OCI-LY7 (cell line): ENCODE measurements at regions of chr4 and their contacts with region 1.

Region 1: GRCh38 chr4:112765317-112765975 is 128.5 kb downstream of the LARP7 start:
- DNase-seq: peak; percentile 65
- H3K4me3 ChIP-seq: no peak overlapping the region
- H3K27ac ChIP-seq: no peak overlapping the region
- H3K4me1 ChIP-seq: no peaks in the 10 kb centered on the region
- CTCF ChIP-seq: peak; percentile 83

Region 2: DNA sequence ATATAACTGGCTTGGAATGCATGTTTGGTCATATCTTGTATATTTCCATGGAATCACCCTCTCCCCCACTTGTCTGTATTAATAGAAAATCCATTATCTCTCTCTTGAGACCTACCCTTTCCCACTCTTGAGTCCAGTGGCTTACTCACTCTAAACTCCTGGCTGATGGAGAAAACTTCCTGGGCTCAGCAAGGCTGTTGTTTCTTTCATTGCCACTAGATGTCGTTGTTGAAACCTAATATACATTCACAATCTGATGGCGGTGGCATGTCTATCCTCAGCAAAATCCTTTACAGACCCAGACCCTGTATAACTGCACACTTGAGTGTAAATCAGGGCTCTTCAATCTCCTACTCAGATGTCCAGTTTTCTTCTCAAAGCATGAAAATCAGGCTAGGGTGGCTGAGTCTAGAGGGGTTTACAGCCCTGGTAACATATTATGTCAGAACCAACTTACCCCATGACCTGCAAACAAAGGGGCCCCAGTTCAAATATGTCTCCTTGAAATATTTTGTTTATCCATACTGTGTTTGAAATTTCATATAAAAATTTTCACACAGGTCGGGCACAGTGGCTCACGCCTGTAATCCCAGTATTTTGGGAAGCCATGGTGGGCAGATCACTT is 690.2 kb before region 1 on chr4:
- CTCF ChIA-PET with region 1: no interaction called
- POLR2A ChIA-PET with region 1: no interaction called
- intact Hi-C with region 1: loop called (anchors 10 kb)
- DNase-seq: peak; percentile 68
- H3K4me3 ChIP-seq: no peak overlapping the region
- H3K27ac ChIP-seq: no peak overlapping the region
- H3K4me1 ChIP-seq: no peaks in the 10 kb centered on the region
- CTCF ChIP-seq: peak; percentile 96

Region 3: DNA sequence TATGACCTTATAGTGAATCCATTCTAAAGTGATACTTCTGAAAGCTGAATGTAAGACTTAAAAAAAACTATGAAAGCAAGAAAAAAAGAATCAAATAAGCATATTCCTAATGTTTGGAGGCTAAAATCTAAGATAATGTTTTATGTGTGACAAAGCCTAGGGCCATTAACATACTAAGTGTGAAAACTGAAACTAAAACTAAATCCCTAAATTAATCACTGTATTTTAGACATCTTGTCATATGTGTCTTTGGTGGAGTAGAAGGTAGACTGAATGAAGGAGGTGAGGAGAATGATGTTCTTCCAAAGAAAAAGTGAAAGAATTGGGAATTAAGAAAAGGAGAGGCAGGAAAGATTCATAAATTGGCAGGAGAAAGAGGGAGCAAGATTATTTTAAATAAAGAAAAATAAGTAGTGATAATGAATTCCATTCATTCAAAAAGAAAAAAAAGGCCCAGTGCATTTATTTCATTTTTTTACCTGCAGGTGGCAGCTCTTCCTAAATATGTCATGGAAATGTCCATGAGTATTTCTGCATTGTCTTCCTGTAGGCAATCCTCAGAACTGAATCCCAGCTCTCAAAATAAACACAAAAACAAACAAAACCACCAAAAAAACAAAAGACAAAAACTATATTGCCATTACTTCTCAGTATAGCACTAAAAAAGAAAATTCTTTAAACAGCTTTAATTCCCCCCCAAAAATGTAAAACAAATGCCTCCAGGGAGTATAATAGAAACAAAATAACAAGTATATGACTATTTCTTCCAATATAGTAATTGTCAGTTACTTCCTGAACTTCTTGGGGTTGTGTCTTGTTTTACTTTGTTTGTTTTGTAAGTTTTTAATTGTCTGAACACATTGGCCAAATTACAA is 550.8 kb before region 1 on chr4:
- CTCF ChIA-PET with region 1: no interaction called
- POLR2A ChIA-PET with region 1: no interaction called
- intact Hi-C with region 1: loop called (anchors 10 kb)
- DNase-seq: peak; percentile 51
- H3K4me3 ChIP-seq: no peak overlapping the region
- H3K27ac ChIP-seq: no peak overlapping the region
- H3K4me1 ChIP-seq: peaks cover 4% of the 10 kb centered on the region
- CTCF ChIP-seq: peak; percentile 84

Region 4: DNA sequence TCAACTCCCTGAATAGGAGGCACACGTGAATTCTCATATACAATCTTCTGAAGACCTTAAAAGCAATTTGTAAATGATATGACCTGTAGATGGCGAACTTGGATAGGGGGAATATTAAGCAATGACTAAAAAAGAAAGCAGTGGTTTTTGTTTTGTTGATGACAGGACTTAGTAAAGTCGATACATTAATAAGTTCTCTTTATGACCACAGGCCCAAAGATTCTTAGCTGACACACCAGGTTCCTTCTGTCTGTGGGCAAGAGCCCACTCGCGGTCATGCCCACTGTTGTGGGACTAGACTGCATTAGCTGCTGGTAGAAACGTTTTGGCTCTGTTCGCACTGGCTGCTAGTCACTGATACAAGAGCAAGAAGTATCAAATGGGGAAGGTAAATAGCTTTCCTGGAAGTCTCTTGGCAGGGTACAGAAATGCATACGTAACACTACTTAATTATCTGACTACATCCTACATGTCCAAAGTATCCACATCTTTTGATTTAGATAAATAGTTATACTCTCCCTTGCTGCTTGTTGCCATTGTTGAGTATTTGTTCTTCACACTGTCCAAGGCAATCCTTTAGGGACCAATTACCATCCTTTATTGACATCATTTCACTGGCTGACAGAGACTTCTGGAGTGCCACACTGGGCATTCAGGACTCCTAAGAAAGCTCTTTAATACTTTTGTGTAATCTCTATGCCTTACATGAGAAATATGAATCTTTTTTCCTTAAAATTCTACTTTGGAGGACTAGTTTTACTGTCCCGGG is 437.3 kb before region 1 on chr4:
- CTCF ChIA-PET with region 1: no interaction called
- POLR2A ChIA-PET with region 1: no interaction called
- intact Hi-C with region 1: loop called (anchors 5 kb)
- DNase-seq: peak; percentile 51
- H3K4me3 ChIP-seq: no peak overlapping the region
- H3K27ac ChIP-seq: no peak overlapping the region
- H3K4me1 ChIP-seq: no peaks in the 10 kb centered on the region
- CTCF ChIP-seq: peak; percentile 80

Region 5: GRCh38 chr4:112636688-112637551 is 128.5 kb before region 1 on chr4 and contains the starts of genes LARP7 and ZGRF1:
- CTCF ChIA-PET with region 1: interaction called, 6 read pairs
- POLR2A ChIA-PET with region 1: interaction called, 8 read pairs
- intact Hi-C with region 1: loop called (anchors 1 kb)
- DNase-seq: peak; percentile 99
- H3K4me3 ChIP-seq: peak within 1 kb of the TSS; percentile 88
- H3K27ac ChIP-seq: peak within 1 kb of the TSS; percentile 79
- H3K4me1 ChIP-seq: peaks cover 33% of the 10 kb centered on the region
- CTCF ChIP-seq: peak; percentile 92
- total RNA-seq, gene LARP7: 35.0 and 61.3 TPM in 2 replicates
- total RNA-seq, gene ZGRF1: 54.4 and 63.5 TPM in 2 replicates